HCT116 (cell line): ENCODE measurements at regions of chr11 and their contacts with region 1.

Region 1: DNA sequence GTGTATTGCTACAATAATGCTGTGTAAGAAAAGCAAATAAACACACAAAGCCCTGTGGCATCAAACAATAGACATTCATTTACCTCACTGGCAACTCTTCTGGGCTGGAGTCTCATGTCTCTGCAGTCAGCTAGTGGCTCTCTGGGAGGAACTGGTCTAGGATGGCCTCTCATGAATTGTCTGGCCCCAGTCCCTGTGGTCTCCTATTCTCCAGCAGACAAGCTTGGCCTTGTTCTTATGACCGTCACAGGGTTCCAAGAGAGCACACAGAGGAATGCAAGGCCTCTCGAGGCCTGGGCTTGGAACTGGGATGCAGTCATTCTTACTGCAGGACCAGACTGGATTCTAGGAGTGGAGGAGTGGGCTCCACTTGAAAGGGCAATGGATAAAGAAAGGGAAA is 141.2 kb upstream of the NTM start:
- DNase-seq: no peak
- ATAC-seq: no peak
- H3K4me3 ChIP-seq: no peak overlapping the region
- H3K27ac ChIP-seq: no peak overlapping the region
- H3K4me1 ChIP-seq: no peaks in the 10 kb centered on the region
- H3K27me3 ChIP-seq: no peaks in the 10 kb centered on the region
- CTCF ChIP-seq: no peak
- POLR2A ChIP-seq: no peak
- RAD21 ChIP-seq: no peak

Region 2: GRCh38 chr11:131038597-131038996 is 190.6 kb before region 1 on chr11:
- CTCF ChIA-PET with region 1: no interaction called
- POLR2A ChIA-PET with region 1: no interaction called
- RAD21 ChIA-PET with region 1: no interaction called
- intact Hi-C with region 1: loop called (anchors 10 kb)
- DNase-seq: no peak
- ATAC-seq: peak; percentile 81
- H3K4me3 ChIP-seq: no peak overlapping the region
- H3K27ac ChIP-seq: no peak overlapping the region
- H3K4me1 ChIP-seq: peaks cover 0 to 4% of the 10 kb centered on the region in 2 experiments; a peak in 1 of 4 replicates
- H3K27me3 ChIP-seq: no peaks in the 10 kb centered on the region
- CTCF ChIP-seq: peak; percentile 6 to 38 (median 18); a peak in 3 of 6 replicates
- POLR2A ChIP-seq: no peak
- RAD21 ChIP-seq: peak; percentile 28; the same call in 1 of the 2 replicates